ENCODE measurements at regions of chr7 and their contacts with region 1.

Region 1: GRCh38 chr7:101436857-101437576 is 74.3 kb downstream of the COL26A1 start:
- DNase-seq: peak; percentile 62
- H3K4me3 ChIP-seq: no peak overlapping the region
- H3K27ac ChIP-seq: no peak overlapping the region
- H3K4me1 ChIP-seq: peaks cover 0 to 4% of the 10 kb centered on the region in 2 experiments; a peak in 1 of 4 replicates
- H3K27me3 ChIP-seq: peaks cover 40% of the 10 kb centered on the region
- CTCF ChIP-seq: no peak
- EP300 ChIP-seq: no peak
- RAD21 ChIP-seq: no peak

Region 2: GRCh38 chr7:101315336-101315735 is 121.7 kb before region 1 on chr7:
- CTCF ChIA-PET with region 1: interaction called, 29 read pairs
- POLR2A ChIA-PET with region 1: no interaction called
- DNase-seq: peak; percentile 58
- H3K4me3 ChIP-seq: no peak overlapping the region; a peak in 1 of 4 replicates
- H3K27ac ChIP-seq: no peak overlapping the region
- H3K4me1 ChIP-seq: no peaks in the 10 kb centered on the region
- H3K27me3 ChIP-seq: no peaks in the 10 kb centered on the region
- CTCF ChIP-seq: peak; percentile 85
- EP300 ChIP-seq: no peak
- RAD21 ChIP-seq: no peak; the same call in 1 of the 2 replicates

Region 3: DNA sequence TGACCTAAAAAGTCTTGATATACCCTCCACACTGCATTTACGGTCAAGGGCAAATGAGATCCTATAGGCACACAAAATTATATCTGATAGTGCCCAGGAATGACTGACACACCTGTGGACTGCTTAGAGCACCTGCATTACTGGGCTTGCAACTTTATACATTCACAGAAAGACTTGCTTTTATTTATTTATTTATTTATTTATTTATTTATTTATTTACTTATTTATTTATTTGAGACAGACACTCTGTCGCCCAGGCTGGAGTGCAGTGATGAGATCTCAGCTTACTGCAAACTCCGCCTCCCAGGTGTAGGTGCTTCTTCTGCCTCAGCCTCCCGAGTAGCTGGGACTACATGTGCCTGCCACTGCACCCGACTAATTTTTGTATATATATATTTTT is 108.9 kb before region 1 on chr7:
- CTCF ChIA-PET with region 1: interaction called, 14 read pairs
- POLR2A ChIA-PET with region 1: no interaction called
- DNase-seq: no peak
- H3K4me3 ChIP-seq: no peak overlapping the region
- H3K27ac ChIP-seq: no peak overlapping the region
- H3K4me1 ChIP-seq: peaks cover 0 to 3% of the 10 kb centered on the region in 2 experiments; a peak in 1 of 4 replicates
- H3K27me3 ChIP-seq: peaks cover 7% of the 10 kb centered on the region; the same call in 1 of the 2 replicates
- CTCF ChIP-seq: no peak
- EP300 ChIP-seq: no peak
- RAD21 ChIP-seq: no peak

Region 4: GRCh38 chr7:101378751-101379184 is 58.2 kb before region 1 on chr7:
- CTCF ChIA-PET with region 1: interaction called, 40 read pairs
- POLR2A ChIA-PET with region 1: no interaction called
- DNase-seq: peak; percentile 36
- H3K4me3 ChIP-seq: no peak overlapping the region
- H3K27ac ChIP-seq: no peak overlapping the region
- H3K4me1 ChIP-seq: peaks cover 0 to 2% of the 10 kb centered on the region in 2 experiments; a peak in 1 of 4 replicates
- H3K27me3 ChIP-seq: 0 out of 2 replicates have a peak, but pooled peaks cover 5% of the 10 kb centered on the region
- CTCF ChIP-seq: no peak
- EP300 ChIP-seq: no peak
- RAD21 ChIP-seq: no peak

Region 5: GRCh38 chr7:101410743-101411507 is 26.1 kb before region 1 on chr7:
- CTCF ChIA-PET with region 1: interaction called, 26 read pairs
- POLR2A ChIA-PET with region 1: no interaction called
- DNase-seq: peak; percentile 94
- H3K4me3 ChIP-seq: peak overlapping the region in 1 of 2 experiments; percentile 30; a peak in 1 of 4 replicates
- H3K27ac ChIP-seq: no peak overlapping the region
- H3K4me1 ChIP-seq: peaks cover 0 to 4% of the 10 kb centered on the region in 2 experiments; a peak in 1 of 4 replicates
- H3K27me3 ChIP-seq: peaks cover 10% of the 10 kb centered on the region; the same call in 1 of the 2 replicates
- CTCF ChIP-seq: peak; percentile 88
- EP300 ChIP-seq: no peak
- RAD21 ChIP-seq: peak; percentile 83

Region 6: GRCh38 chr7:101453617-101454016 is 16.6 kb after region 1 on chr7:
- CTCF ChIA-PET with region 1: interaction called, 14 read pairs
- POLR2A ChIA-PET with region 1: no interaction called
- DNase-seq: peak; percentile 6
- H3K4me3 ChIP-seq: no peak overlapping the region
- H3K27ac ChIP-seq: no peak overlapping the region
- H3K4me1 ChIP-seq: no peaks in the 10 kb centered on the region
- H3K27me3 ChIP-seq: peaks cover 10% of the 10 kb centered on the region
- CTCF ChIP-seq: no peak
- EP300 ChIP-seq: no peak
- RAD21 ChIP-seq: no peak

Region 7: GRCh38 chr7:101486433-101487104 is 49.6 kb after region 1 on chr7:
- CTCF ChIA-PET with region 1: interaction called, 13 read pairs
- POLR2A ChIA-PET with region 1: interaction called, 4 read pairs
- DNase-seq: peak; percentile 83
- H3K4me3 ChIP-seq: no peak overlapping the region
- H3K27ac ChIP-seq: peak overlapping the region in 1 of 2 experiments; percentile 77; a peak in 2 of 4 replicates
- H3K4me1 ChIP-seq: peaks cover 3 to 28% of the 10 kb centered on the region in 2 experiments; a peak in 1 of 4 replicates
- H3K27me3 ChIP-seq: no peaks in the 10 kb centered on the region
- CTCF ChIP-seq: no peak
- EP300 ChIP-seq: no peak
- RAD21 ChIP-seq: no peak